ENCODE measurements at regions of chr15 and their contacts with region 1.

Region 1: DNA sequence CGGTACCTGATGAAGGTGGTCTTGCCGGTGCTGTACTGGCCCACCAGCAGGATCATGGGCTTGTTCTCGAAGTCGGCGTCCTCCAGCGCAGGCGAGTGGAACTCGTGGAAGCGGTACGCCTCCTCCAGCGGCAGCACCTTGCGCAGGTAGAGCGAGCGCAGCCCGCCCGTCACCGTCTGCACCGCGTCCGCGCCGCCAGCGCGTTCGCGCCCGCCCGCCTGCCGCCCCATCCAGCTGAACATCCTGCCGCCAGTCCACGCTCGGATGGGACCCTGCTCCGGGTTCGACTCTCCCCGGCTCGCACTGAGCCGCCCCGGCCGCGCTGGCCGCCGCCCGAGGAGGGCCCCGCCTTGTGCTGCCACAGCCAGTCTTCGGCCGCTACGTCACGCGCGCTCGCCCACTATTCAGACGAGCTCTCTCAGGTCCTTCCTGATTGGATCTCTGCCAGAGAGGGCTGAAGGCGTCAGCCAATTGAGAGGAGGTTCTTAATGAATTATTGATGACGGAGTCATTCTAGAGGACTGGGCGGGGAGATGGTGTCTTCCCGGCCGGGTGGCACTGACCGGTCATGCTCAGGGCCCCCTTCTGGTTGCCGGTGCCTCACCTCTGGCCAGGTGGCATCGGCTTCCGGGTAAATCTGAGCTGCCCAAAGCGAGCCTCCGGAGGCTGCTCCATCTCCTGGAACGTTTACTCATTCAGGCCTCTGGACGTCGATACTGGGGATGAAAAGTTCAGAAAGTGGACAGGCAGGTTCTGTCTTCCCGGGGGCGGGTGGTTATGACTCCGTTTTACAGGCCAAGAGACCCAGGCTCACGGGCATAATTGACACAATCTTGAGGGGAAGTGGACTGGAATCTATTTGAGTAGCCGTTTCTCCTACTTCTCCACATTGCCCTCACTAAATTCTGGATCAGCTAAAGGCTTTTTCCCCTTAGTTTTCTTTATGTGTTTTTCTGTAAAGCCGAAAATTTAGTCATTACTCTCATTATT is at the start of gene EHD4:
- DNase-seq: peak; percentile 95
- ATAC-seq: peak; percentile 87
- H3K4me3 ChIP-seq: peak within 1 kb of the TSS; percentile 62 to 95 (median 83)
- H3K4me3 Mint-ChIP-seq: peak within 1 kb of the TSS; percentile 90
- H3K27ac ChIP-seq: peak within 1 kb of the TSS; percentile 71 to 84
- H3K27ac Mint-ChIP-seq: peak within 1 kb of the TSS; percentile 95
- H3K4me1 ChIP-seq: peaks cover 42 to 43% of the 10 kb centered on the region in 2 donors
- H3K4me1 Mint-ChIP-seq: peaks cover 47% of the 10 kb centered on the region
- H3K27me3 ChIP-seq: no peaks in the 10 kb centered on the region
- H3K27me3 Mint-ChIP-seq: peaks cover 16% of the 10 kb centered on the region
- CTCF ChIP-seq: no peak
- total RNA-seq, gene EHD4: 12.7 and 13.4 TPM in 2 replicates

Region 2: GRCh38 chr15:40694688-40695468 is 1277.7 kb before region 1 on chr15 and contains the start of gene RAD51:
- CTCF ChIA-PET with region 1: no interaction called
- POLR2A ChIA-PET with region 1: no interaction called
- intact Hi-C with region 1: loop called (anchors 10 kb)
- DNase-seq: peak; percentile 96
- ATAC-seq: peak; percentile 88
- H3K4me3 ChIP-seq: peak within 1 kb of the TSS; percentile 84 to 100 (median 87)
- H3K4me3 Mint-ChIP-seq: peak within 1 kb of the TSS; percentile 100
- H3K27ac ChIP-seq: peak within 1 kb of the TSS; percentile 93 to 94
- H3K27ac Mint-ChIP-seq: peak within 1 kb of the TSS; percentile 99
- H3K4me1 ChIP-seq: peaks cover 7 to 18% of the 10 kb centered on the region in 2 donors
- H3K4me1 Mint-ChIP-seq: peaks cover 25% of the 10 kb centered on the region
- H3K27me3 ChIP-seq: no peaks in the 10 kb centered on the region
- H3K27me3 Mint-ChIP-seq: no peaks in the 10 kb centered on the region
- CTCF ChIP-seq: no peak
- total RNA-seq, gene RAD51: 1.9 and 2.0 TPM in 2 replicates

Region 3: GRCh38 chr15:41827880-41828806 is 144.4 kb before region 1 on chr15 and contains the start of gene JMJD7:
- CTCF ChIA-PET with region 1: no interaction called
- POLR2A ChIA-PET with region 1: no interaction called
- intact Hi-C with region 1: loop called (anchors 1 kb)
- DNase-seq: peak; percentile 93
- ATAC-seq: peak; percentile 99
- H3K4me3 ChIP-seq: peak within 1 kb of the TSS; percentile 54 to 95 (median 87)
- H3K4me3 Mint-ChIP-seq: peak within 1 kb of the TSS; percentile 86
- H3K27ac ChIP-seq: peak within 1 kb of the TSS; percentile 32 to 53
- H3K27ac Mint-ChIP-seq: peak within 1 kb of the TSS; percentile 63
- H3K4me1 ChIP-seq: peaks cover 16 to 28% of the 10 kb centered on the region in 2 donors
- H3K4me1 Mint-ChIP-seq: peaks cover 26% of the 10 kb centered on the region
- H3K27me3 ChIP-seq: no peaks in the 10 kb centered on the region
- H3K27me3 Mint-ChIP-seq: no peaks in the 10 kb centered on the region
- CTCF ChIP-seq: no peak
- total RNA-seq, gene JMJD7: 41.1 and 43.9 TPM in 2 replicates

Region 4: GRCh38 chr15:41894791-41895463 is 77.6 kb before region 1 on chr15:
- CTCF ChIA-PET with region 1: interaction called, 4 read pairs
- POLR2A ChIA-PET with region 1: no interaction called
- intact Hi-C with region 1: loop called (anchors 2 kb)
- DNase-seq: peak; percentile 84
- ATAC-seq: peak; percentile 98
- H3K4me3 ChIP-seq: peak overlapping the region in 4 of 5 experiments; percentile 10 to 47 (median 30)
- H3K4me3 Mint-ChIP-seq: peak overlapping the region; percentile 84
- H3K27ac ChIP-seq: peak overlapping the region; percentile 71 to 80
- H3K27ac Mint-ChIP-seq: peak overlapping the region; percentile 97
- H3K4me1 ChIP-seq: peaks cover 37 to 41% of the 10 kb centered on the region in 2 donors
- H3K4me1 Mint-ChIP-seq: peaks cover 40% of the 10 kb centered on the region
- H3K27me3 ChIP-seq: no peaks in the 10 kb centered on the region
- H3K27me3 Mint-ChIP-seq: no peaks in the 10 kb centered on the region
- CTCF ChIP-seq: no peak

Region 5: GRCh38 chr15:41930221-41930866 is 42.2 kb before region 1 on chr15:
- CTCF ChIA-PET with region 1: interaction called, 4 read pairs
- POLR2A ChIA-PET with region 1: interaction called, 7 read pairs
- intact Hi-C with region 1: loop called (anchors 1 kb)
- DNase-seq: no peak
- ATAC-seq: no peak
- H3K4me3 ChIP-seq: no peak overlapping the region
- H3K4me3 Mint-ChIP-seq: peak overlapping the region; percentile 67
- H3K27ac ChIP-seq: peak overlapping the region; percentile 79 to 89
- H3K27ac Mint-ChIP-seq: peak overlapping the region; percentile 88
- H3K4me1 ChIP-seq: peaks cover 62 to 75% of the 10 kb centered on the region in 2 donors
- H3K4me1 Mint-ChIP-seq: peaks cover 61% of the 10 kb centered on the region
- H3K27me3 ChIP-seq: no peaks in the 10 kb centered on the region
- H3K27me3 Mint-ChIP-seq: no peaks in the 10 kb centered on the region
- CTCF ChIP-seq: no peak

Region 6: GRCh38 chr15:41989259-41989933 is 16.8 kb after region 1 on chr15:
- CTCF ChIA-PET with region 1: interaction called, 14 read pairs
- POLR2A ChIA-PET with region 1: interaction called, 3 read pairs
- intact Hi-C with region 1: no loop called
- DNase-seq: peak; percentile 82
- ATAC-seq: peak; percentile 99
- H3K4me3 ChIP-seq: no peak overlapping the region
- H3K4me3 Mint-ChIP-seq: no peak overlapping the region
- H3K27ac ChIP-seq: no peak overlapping the region
- H3K27ac Mint-ChIP-seq: no peak overlapping the region
- H3K4me1 ChIP-seq: no peaks in the 10 kb centered on the region
- H3K4me1 Mint-ChIP-seq: no peaks in the 10 kb centered on the region
- H3K27me3 ChIP-seq: peaks cover 0 to 9% (median 4%) of the 10 kb centered on the region in 4 experiments
- H3K27me3 Mint-ChIP-seq: no peaks in the 10 kb centered on the region
- CTCF ChIP-seq: peak; percentile 99

Region 7: GRCh38 chr15:43118829-43119228 is 1146.3 kb after region 1 on chr15:
- CTCF ChIA-PET with region 1: no interaction called
- POLR2A ChIA-PET with region 1: no interaction called
- intact Hi-C with region 1: loop called (anchors 5 kb)
- DNase-seq: no peak
- ATAC-seq: no peak
- H3K4me3 ChIP-seq: peak overlapping the region in 1 of 5 experiments; percentile 33
- H3K4me3 Mint-ChIP-seq: peak overlapping the region; percentile 15
- H3K27ac ChIP-seq: peak overlapping the region; percentile 60 to 68
- H3K27ac Mint-ChIP-seq: peak overlapping the region; percentile 87
- H3K4me1 ChIP-seq: peaks cover 27 to 37% of the 10 kb centered on the region in 2 donors
- H3K4me1 Mint-ChIP-seq: peaks cover 36% of the 10 kb centered on the region
- H3K27me3 ChIP-seq: no peaks in the 10 kb centered on the region
- H3K27me3 Mint-ChIP-seq: no peaks in the 10 kb centered on the region
- CTCF ChIP-seq: no peak